ENCODE measurements at regions of chr9 and their contacts with region 1.

Region 1: DNA sequence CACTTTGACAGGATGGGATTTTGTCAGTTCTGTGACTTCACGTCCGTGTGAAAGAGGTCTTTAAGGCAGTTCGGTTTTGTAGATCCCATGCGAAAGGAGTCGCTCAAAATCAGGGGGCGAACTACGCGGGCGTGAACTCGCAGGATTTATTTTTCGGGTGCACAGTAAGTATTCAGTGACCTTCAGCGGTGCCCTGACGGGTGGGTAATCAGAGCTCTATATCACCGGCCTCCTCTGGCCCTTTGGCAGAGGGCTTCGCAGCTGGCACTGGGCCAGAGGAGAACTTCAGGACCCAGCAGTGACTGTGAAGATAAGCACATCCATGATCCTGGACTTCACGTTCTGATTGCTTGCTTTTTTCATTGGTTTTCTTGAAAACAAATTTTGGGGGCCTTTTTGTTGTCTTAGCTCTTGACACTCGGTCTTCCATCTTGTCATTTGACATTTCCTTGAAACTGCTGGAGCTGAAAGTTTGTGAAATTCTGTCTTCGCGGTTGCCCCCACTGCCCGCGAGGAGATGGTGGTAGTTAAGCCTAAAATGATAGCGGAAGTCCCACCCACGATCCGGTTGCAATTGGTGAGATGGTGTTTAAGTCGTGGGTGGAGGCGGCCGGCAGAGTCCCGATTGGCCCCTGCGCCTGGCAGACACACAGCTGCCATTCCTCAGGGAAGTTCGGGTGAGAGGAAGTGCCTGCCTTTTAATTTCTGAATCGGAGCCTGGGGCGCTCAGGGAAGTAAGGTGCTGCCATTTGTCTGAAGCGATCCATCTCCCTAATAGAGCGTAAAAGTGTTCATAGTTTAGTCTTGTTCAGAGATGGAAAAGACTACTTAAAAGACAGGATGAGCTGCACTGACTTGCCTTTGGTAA is at the start of gene FAM120AOS:
- DNase-seq: peak; percentile 93 to 96 (median 95)
- ATAC-seq: peak; percentile 91
- H3K4me3 ChIP-seq: peak within 1 kb of the TSS; percentile 86
- H3K27ac ChIP-seq: peak within 1 kb of the TSS; percentile 97
- H3K4me1 ChIP-seq: peaks cover 2% of the 10 kb centered on the region
- H3K27me3 ChIP-seq: no peaks in the 10 kb centered on the region
- total RNA-seq, gene FAM120AOS: 38.2 to 45.6 (median 41.2) TPM

Region 2: GRCh38 chr9:93095205-93096130 is 357.8 kb before region 1 on chr9:
- intact Hi-C with region 1: loop called in 1 of 4 experiments (anchors 10 kb)
- DNase-seq: peak; percentile 100
- ATAC-seq: peak; percentile 89 to 90
- H3K4me3 ChIP-seq: peak overlapping the region; percentile 23
- H3K27ac ChIP-seq: peak overlapping the region; percentile 85
- H3K4me1 ChIP-seq: peaks cover 8% of the 10 kb centered on the region
- H3K27me3 ChIP-seq: no peaks in the 10 kb centered on the region

Region 3: DNA sequence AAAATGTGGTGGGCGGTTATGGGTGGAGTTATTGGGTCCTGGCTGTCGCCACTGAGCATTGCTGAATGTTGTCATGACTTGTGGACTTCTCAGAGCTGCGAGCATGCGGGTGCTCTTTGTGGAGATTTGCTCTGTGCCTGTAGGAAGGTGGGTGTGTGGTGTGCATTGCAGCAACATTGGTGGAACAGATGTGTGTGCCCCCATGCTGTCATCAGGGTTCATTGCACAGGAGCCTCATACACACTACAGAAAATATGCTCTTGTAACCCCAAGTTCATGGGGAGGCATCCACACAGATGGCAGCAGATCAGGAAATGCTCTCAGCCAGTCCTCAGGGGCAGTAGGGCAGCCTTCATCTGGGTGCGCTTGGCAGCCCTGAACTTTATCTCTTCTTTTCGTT is 67.2 kb after region 1 on chr9:
- intact Hi-C with region 1: loop called in 3 of 4 experiments (anchors 10 kb)
- DNase-seq: no peak
- ATAC-seq: no peak
- H3K4me3 ChIP-seq: no peak overlapping the region
- H3K27ac ChIP-seq: no peak overlapping the region
- H3K4me1 ChIP-seq: peaks cover 9% of the 10 kb centered on the region
- H3K27me3 ChIP-seq: no peaks in the 10 kb centered on the region

Region 4: DNA sequence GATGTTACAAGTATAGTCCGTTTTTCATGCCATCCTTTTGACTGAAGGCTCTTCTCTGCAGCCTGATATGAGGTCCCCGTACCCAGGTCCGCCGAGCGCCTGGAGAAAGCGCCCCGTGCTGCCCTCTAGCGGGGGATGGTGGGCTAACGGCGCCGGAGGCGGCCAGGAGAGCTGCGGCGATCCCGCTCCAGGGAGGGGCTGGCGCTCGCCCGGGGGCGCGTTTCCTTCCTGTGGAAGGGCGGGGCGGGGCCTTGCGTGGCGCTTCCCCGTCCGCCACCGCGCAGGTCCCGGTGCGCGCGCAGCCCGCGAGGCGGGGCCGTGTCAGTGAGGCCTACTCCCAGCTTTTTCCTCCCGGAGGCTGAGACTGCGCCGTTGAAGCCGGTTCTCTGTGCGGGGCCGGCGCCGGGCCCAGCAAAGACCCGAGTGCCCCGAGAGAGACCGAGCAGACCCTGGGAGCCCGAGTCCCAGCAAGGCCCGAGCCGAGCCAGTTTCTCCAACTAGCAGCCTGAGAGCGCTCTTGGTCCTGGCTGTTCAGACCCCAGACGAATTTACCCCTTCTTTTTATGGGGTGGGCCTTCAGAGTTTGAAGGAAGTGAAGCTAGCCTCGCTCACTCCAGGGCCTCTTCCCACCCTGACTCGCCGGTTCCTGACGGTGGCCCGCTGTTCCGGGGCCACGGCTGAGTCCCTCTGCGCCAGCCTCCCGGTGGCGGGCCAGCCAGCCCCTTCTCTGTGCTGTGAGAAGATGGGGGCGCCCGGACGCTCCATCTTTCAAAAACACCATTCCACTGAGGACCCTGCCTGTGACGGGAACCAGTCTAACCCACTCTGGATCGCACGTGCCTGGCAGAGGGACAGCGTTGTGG is 113.4 kb after region 1 on chr9:
- intact Hi-C with region 1: loop called (anchors 5 to 10 kb)
- DNase-seq: peak; percentile 99 to 100 (median 100)
- ATAC-seq: peak; percentile 99
- H3K4me3 ChIP-seq: peak overlapping the region; percentile 56
- H3K27ac ChIP-seq: peak overlapping the region; percentile 97
- H3K4me1 ChIP-seq: peaks cover 3% of the 10 kb centered on the region
- H3K27me3 ChIP-seq: no peaks in the 10 kb centered on the region